ENCODE measurements at regions of chr3 and their contacts with region 1.

Region 1: DNA sequence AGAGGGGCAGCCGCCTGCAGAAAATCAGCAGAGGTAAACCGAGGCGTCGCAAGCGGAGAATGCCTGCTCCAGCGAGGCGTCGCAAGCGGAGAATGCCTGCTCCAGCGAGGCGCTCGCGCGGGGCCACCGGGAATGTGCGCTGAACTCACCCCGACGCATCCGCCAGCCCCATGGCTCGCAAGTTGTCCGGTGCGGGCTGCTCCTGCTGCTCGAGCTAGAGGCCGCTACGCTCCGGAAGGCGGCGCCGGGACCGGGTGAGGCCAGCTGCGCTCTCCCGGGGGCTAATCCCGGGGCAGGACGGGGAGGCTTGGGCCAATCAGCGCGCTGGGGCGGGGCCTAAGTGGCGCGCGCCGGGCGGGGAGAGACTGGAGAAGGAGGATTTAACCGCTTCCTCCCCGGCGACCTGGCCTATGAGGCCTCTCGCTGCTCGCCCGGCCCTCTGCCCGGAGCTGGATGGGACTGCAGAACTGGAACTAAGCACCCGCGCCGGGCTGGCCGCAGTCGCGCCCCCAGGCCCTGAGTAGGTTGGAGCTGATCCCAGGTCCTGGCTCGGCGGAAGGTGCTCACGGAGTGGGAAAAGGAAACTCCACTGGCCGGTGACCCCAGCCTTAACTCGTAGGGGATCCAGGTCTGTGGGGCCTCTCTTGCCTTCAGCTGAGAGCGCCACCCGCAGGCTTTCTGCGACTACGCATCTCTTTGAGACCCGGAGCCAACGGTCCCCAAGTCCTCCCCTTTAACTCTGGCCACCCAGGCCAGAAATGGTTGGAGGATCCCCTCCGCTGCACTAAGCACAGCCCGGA is at the start of gene SLC26A6:
- DNase-seq: peak; percentile 90 to 98
- H3K4me3 ChIP-seq: peak within 1 kb of the TSS; percentile 95 to 97
- H3K27ac ChIP-seq: peak within 1 kb of the TSS; percentile 80 to 81
- H3K4me1 ChIP-seq: peaks cover 0 to 22% of the 10 kb centered on the region in 2 donors
- H3K27me3 ChIP-seq: no peaks in the 10 kb centered on the region
- CTCF ChIP-seq: peak; percentile 34 to 62 (median 40)
- total RNA-seq, gene SLC26A6: 28.1 TPM

Region 2: GRCh38 chr3:48472915-48473616 is 162.4 kb before region 1 on chr3:
- intact Hi-C with region 1: loop called (anchors 10 kb)
- DNase-seq: peak; percentile 84 to 97
- H3K4me3 ChIP-seq: peak overlapping the region; percentile 60 to 78
- H3K27ac ChIP-seq: peak overlapping the region; percentile 96 to 98
- H3K4me1 ChIP-seq: peaks cover 4 to 33% of the 10 kb centered on the region in 2 donors
- H3K27me3 ChIP-seq: no peaks in the 10 kb centered on the region
- CTCF ChIP-seq: peak in 1 of 3 experiments; percentile 43

Region 3: DNA sequence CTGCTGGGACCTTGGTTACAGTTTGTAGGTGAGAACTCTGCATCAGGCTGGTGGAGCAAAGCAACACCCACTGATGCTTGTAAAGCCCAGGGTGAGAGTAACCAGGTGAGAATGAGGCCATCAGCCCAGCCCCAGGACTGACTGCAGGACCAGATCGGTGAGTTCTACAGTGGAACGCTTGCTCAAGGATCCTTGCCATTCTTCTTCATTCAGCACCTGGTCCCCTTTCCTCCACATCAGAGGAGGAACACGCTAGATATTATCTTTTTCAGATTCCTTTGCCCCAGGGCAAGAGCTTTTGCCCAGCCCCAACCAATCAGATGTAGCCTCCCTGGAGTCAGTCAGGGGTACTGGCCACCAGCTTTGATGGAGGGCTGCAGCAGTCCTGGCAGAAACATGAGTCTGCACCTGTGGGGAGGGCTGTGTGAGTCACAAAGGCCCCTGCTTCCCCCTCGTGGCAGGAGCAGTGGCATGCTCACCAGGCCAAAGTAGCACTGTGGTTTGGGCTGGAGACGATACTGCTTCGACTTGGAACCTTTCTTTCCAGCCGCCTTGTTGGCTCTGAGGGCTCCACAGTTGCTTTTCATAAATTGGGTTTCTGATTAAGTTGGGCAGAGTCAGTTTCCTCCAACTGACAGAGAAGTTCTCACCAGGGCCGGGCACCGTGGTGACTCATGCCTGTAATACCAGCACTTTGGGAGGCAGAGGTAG is 127.9 kb before region 1 on chr3:
- intact Hi-C with region 1: loop called (anchors 5 kb)
- DNase-seq: peak; percentile 35 to 81
- H3K4me3 ChIP-seq: no peak overlapping the region
- H3K27ac ChIP-seq: peak overlapping the region; percentile 69 to 76
- H3K4me1 ChIP-seq: peaks cover 0 to 23% of the 10 kb centered on the region in 2 donors
- H3K27me3 ChIP-seq: no peaks in the 10 kb centered on the region
- CTCF ChIP-seq: peak; percentile 34 to 58 (median 52)

Region 4: DNA sequence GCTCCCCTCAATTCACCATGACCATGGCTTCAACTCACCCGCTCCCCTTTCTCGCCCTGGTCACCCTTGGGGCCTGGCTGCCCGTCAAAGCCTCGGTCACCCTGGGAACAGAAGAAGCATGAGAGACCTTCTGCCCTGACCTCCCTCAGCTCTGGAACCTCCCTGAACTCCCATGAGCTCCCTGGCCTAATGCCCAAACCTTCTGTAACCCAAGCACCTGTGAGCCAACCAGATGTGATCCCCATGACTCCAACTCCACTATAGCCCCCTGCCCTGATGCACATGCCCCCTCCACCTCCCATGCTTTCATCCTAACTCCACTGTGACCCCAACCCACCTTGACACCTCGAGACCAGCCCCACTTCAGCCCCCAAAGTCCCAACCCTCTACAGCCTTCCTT is 68.3 kb before region 1 on chr3:
- intact Hi-C with region 1: no loop called
- DNase-seq: no peak
- H3K4me3 ChIP-seq: no peak overlapping the region
- H3K27ac ChIP-seq: no peak overlapping the region
- H3K4me1 ChIP-seq: no peaks in the 10 kb centered on the region
- H3K27me3 ChIP-seq: no peaks in the 10 kb centered on the region
- CTCF ChIP-seq: no peak

Region 5: GRCh38 chr3:48595526-48596121 is 39.8 kb before region 1 on chr3:
- intact Hi-C with region 1: loop called (anchors 5 kb)
- DNase-seq: peak; percentile 66 to 91
- H3K4me3 ChIP-seq: peak overlapping the region; percentile 44 to 73
- H3K27ac ChIP-seq: peak overlapping the region; percentile 94 to 95
- H3K4me1 ChIP-seq: peaks cover 24 to 50% of the 10 kb centered on the region in 2 donors
- H3K27me3 ChIP-seq: no peaks in the 10 kb centered on the region
- CTCF ChIP-seq: no peak

Region 6: GRCh38 chr3:48609088-48610005 is 26.1 kb before region 1 on chr3 and contains the start of gene UQCRC1:
- intact Hi-C with region 1: loop called (anchors 1 kb)
- DNase-seq: peak; percentile 67 to 96
- H3K4me3 ChIP-seq: peak within 1 kb of the TSS; percentile 65 to 92
- H3K27ac ChIP-seq: peak within 1 kb of the TSS; percentile 80 to 84
- H3K4me1 ChIP-seq: peaks cover 5 to 15% of the 10 kb centered on the region in 2 donors
- H3K27me3 ChIP-seq: no peaks in the 10 kb centered on the region
- CTCF ChIP-seq: peak; percentile 81 to 95 (median 86)
- total RNA-seq, gene UQCRC1: 193 TPM

Region 7: DNA sequence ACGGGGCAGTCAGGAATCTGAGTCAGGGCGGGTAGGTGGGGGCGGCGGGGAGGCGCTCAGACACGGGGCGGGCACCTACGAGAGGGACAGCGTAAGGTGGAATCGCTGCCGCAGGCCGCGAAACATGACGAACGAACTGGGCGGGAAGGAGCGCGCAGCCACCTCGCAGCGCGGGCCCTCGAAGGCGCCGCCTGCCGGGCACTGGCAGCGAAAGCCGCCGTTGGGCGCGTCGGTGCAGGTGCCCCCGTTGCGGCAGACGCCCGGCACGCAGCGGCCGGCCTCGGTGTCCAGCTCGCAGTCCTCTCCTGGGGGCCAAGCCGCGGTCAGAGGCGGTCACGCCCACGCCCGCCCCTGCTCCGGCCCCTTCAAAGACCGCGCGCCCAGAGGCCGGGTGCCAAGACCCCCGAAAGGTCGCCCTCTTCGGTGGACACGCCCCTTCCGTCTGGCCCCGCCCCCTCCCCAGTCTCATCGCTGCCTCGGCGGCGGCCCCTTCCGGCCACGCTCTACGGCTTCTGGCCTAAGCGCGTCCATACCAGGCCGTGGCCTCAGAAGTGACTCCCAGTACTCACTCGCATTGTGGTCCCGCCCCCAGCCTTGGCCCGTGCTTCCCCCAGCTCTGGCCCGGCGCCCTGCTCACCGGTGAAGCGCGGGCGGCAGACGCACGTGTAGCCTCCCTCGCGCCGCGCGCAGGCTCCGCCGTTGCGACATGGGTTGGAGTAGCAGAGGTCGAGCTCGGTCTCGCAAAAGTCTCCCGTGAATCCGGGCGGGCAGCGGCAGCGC is 20.8 kb after region 1 on chr3:
- intact Hi-C with region 1: loop called (anchors 1 kb)
- DNase-seq: peak; percentile 62 to 89
- H3K4me3 ChIP-seq: peak overlapping the region; percentile 70 to 77
- H3K27ac ChIP-seq: peak overlapping the region; percentile 68 to 89
- H3K4me1 ChIP-seq: peaks cover 8 to 19% of the 10 kb centered on the region in 2 donors
- H3K27me3 ChIP-seq: no peaks in the 10 kb centered on the region
- CTCF ChIP-seq: peak; percentile 50 to 83 (median 69)

Measured in ascending aorta (tissue), 2 donors.